GM12878 (cell line): ENCODE measurements at regions of chr7 and their contacts with region 1.

Region 1: DNA sequence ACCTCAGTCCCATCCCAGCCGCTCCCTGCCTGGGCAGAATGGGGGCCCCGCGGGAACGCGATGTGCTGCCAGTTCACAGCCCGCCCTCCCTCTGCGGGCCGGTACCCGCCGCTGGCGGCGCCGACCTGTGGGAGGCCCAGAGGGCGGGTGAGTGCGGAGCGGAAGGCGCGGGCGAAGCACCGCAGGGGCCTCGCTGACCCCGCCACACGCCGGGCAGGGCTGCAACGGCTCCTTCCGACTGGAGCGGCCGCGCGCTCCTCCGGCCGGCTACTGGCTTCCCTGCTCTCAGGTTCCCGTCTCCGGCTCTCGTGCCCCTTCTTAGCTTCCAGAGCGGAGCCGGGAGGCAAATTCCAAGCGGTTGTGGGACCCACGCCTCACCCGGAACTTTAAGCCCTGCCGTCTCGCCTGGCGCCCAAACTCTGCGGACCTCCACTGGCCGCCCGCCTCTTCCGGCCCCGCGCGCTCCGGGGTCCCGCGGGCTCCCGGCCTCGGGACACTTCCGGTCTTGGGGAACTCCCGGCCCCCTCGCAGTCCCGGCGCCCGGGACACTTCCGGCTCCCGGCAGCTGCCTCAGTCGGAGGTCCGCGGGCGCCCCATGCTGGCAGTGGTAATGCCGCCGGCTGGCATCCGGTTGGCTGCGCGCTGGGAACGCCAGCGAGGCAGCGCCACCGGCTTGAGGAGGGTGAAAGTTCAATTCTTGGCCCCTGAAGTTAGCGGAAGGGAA is at the start of gene CYREN:
- DNase-seq: no peak
- ATAC-seq: peak; percentile 78
- H3K4me3 ChIP-seq: peak within 1 kb of the TSS; percentile 84
- H3K27ac ChIP-seq: peak within 1 kb of the TSS; percentile 96
- H3K4me1 ChIP-seq: peaks cover 24% of the 10 kb centered on the region
- H3K27me3 ChIP-seq: no peaks in the 10 kb centered on the region
- CTCF ChIP-seq: peak; percentile 69 to 88 (median 70)
- EP300 ChIP-seq: no peak; a peak in 1 of 4 replicates
- POLR2A ChIP-seq: peak; percentile 88; the same call in 1 of the 2 replicates
- RAD21 ChIP-seq: peak; percentile 74
- polyA plus RNA-seq, gene CYREN: 8.7 to 12.9 TPM

Region 2: GRCh38 chr7:134745851-134746250 is 424.6 kb before region 1 on chr7:
- CTCF ChIA-PET with region 1: no interaction called
- POLR2A ChIA-PET with region 1: no interaction called
- RAD21 ChIA-PET with region 1: no interaction called
- SMC1A ChIA-PET with region 1: no interaction called
- in situ Hi-C with region 1: no loop called
- intact Hi-C with region 1: no loop called
- DNase-seq: no peak
- ATAC-seq: no peak
- H3K4me3 ChIP-seq: no peak overlapping the region
- H3K27ac ChIP-seq: no peak overlapping the region
- H3K4me1 ChIP-seq: no peaks in the 10 kb centered on the region
- H3K27me3 ChIP-seq: 0 out of 4 replicates have a peak, but pooled peaks cover 0 to 2% of the 10 kb centered on the region in 2 experiments
- CTCF ChIP-seq: no peak
- EP300 ChIP-seq: no peak
- POLR2A ChIP-seq: no peak
- RAD21 ChIP-seq: no peak

Region 3: DNA sequence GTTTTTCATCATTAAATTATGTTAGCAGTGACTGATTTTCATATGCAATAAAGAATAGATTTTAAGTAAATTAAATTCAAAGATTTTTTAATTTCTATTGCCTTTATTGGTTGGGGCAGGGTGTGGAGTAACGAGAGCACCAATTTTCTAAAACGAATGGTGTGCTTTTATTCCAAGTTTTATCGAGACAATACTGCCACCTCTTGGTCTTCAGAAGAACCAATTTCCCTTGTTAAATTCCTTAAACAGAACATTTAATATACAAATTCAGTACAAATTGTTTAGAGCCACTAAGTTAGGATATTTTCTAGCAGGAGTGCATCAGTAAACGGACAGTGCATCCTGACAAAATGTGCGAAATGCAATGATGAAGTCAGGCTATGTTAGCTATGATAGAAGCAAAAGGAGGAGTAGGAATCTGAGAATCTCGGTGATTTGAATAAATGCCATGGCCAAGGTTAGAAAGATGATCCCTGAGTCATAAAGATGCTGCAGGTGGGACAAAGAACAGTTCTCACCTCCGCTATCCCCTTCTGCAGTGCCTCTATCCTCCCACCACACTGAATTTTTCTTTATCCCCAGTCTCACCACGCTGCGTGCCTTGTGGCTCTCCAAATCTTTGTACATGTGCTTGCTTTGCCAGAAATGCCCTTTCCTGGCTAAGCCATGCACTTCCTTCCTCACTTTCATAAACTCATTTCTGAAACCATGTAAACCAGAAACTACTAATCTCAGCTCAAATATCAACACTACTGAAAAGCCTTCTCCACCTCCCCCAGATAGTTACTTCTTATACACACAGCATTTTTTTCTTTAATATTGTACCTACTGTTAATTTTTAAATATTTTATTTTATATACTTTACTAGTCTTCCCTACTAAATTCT is 216.0 kb before region 1 on chr7:
- CTCF ChIA-PET with region 1: interaction called, 24 read pairs
- POLR2A ChIA-PET with region 1: no interaction called
- RAD21 ChIA-PET with region 1: interaction called, 10 read pairs
- SMC1A ChIA-PET with region 1: interaction called, 6 read pairs
- in situ Hi-C with region 1: no loop called
- intact Hi-C with region 1: no loop called
- DNase-seq: peak; percentile 15
- ATAC-seq: peak; percentile 83
- H3K4me3 ChIP-seq: no peak overlapping the region
- H3K27ac ChIP-seq: no peak overlapping the region
- H3K4me1 ChIP-seq: no peaks in the 10 kb centered on the region; the same call in 1 of the 2 replicates
- H3K27me3 ChIP-seq: no peaks in the 10 kb centered on the region
- CTCF ChIP-seq: peak; percentile 49 to 64 (median 58)
- EP300 ChIP-seq: no peak
- POLR2A ChIP-seq: no peak
- RAD21 ChIP-seq: peak; percentile 72

Region 4: DNA sequence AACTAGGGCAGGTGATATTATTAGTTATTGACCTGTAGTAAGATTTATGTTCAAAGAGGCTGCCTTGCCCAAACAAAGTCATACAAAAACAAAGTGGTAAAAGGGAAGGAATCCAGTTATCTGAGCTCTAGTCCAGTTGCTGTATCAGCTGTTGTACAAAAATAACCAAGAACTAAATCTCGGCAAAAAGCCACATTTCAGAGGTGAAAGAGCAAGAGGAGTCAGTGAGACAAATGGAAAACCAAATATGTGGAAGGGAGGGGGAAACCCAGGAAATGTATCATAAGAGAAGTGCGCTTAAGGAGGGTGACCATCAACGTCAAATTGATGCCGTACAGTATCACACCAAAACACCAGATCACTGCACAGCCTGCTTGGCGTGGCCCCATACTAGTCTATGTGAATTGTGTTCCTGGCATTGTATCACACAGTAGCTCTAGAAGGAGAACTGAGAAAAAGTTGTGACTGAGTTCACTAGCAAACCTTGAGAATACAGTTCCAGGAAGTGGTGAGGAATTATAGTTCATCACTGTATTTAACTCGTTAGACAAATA is 177.7 kb before region 1 on chr7:
- CTCF ChIA-PET with region 1: interaction called, 157 read pairs
- POLR2A ChIA-PET with region 1: interaction called, 41 read pairs
- RAD21 ChIA-PET with region 1: interaction called, 120 read pairs
- SMC1A ChIA-PET with region 1: interaction called, 97 read pairs
- in situ Hi-C with region 1: loop called (anchors 5 kb)
- intact Hi-C with region 1: loop called (anchors 1 kb)
- DNase-seq: peak; percentile 96
- ATAC-seq: peak; percentile 67
- H3K4me3 ChIP-seq: peak overlapping the region; percentile 32; the same call in 1 of the 2 replicates
- H3K27ac ChIP-seq: peak overlapping the region; percentile 99
- H3K4me1 ChIP-seq: peaks cover 61% of the 10 kb centered on the region
- H3K27me3 ChIP-seq: no peaks in the 10 kb centered on the region
- CTCF ChIP-seq: no peak
- EP300 ChIP-seq: peak; percentile 86 to 95
- POLR2A ChIP-seq: peak; percentile 77
- RAD21 ChIP-seq: no peak

Region 5: GRCh38 chr7:135160098-135160857 is 10.2 kb before region 1 on chr7:
- CTCF ChIA-PET with region 1: interaction called, 28 read pairs
- POLR2A ChIA-PET with region 1: interaction called, 19 read pairs
- RAD21 ChIA-PET with region 1: interaction called, 17 read pairs
- SMC1A ChIA-PET with region 1: interaction called, 23 read pairs
- in situ Hi-C with region 1: no loop called
- intact Hi-C with region 1: no loop called
- DNase-seq: no peak
- ATAC-seq: peak; percentile 59
- H3K4me3 ChIP-seq: no peak overlapping the region; the same call in 1 of the 2 replicates
- H3K27ac ChIP-seq: peak overlapping the region; percentile 84
- H3K4me1 ChIP-seq: peaks cover 32% of the 10 kb centered on the region
- H3K27me3 ChIP-seq: no peaks in the 10 kb centered on the region
- CTCF ChIP-seq: no peak
- EP300 ChIP-seq: peak in 1 of 2 experiments; percentile 15; a peak in 1 of 4 replicates
- POLR2A ChIP-seq: no peak; the same call in 1 of the 2 replicates
- RAD21 ChIP-seq: no peak

Region 6: DNA sequence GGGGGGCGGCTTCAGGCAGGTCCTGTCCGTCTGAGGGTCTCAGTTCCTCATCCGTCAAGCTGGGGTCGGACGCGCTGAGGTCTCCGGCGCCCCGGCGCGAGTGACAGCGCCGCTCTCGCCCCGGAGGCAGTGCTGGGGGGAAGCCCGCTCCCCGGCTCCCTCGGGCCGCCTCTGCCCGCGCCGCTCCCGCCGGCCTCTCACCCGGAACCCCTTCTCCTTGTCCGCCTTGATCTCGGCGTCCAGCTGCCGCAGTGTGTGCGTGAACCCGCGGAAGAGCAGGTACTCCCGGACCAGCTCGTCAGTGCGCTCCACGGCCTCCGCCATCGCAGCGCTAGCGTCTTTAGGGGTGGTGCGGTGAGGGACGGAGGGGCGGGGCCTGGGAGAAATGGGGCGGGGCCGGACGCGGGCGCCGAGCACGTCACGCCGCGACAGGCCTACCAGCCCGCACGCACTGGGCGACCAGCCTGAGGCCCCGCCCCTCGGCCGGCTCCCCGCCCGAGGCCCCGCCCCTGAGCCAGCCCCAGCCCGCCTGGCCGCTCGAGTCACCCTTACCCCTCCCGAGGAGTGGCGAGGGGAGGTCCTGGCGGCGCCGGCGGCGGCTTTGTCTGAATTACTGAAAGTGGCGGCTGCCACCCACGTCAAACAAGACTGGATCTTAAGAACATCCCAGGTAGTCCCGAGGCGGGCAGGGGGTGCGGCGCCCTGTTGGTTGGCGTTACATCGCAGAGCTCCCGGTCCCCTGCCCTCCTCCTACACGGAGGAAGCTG is 40.9 kb after region 1 on chr7 and contains the start of gene WDR91:
- CTCF ChIA-PET with region 1: interaction called, 109 read pairs
- POLR2A ChIA-PET with region 1: interaction called, 96 read pairs
- RAD21 ChIA-PET with region 1: interaction called, 151 read pairs
- SMC1A ChIA-PET with region 1: interaction called, 93 read pairs
- in situ Hi-C with region 1: no loop called
- intact Hi-C with region 1: loop called (anchors 1 kb)
- DNase-seq: peak; percentile 81
- ATAC-seq: peak; percentile 83
- H3K4me3 ChIP-seq: peak within 1 kb of the TSS; percentile 99
- H3K27ac ChIP-seq: peak within 1 kb of the TSS; percentile 91
- H3K4me1 ChIP-seq: peaks cover 39% of the 10 kb centered on the region
- H3K27me3 ChIP-seq: no peaks in the 10 kb centered on the region
- CTCF ChIP-seq: no peak
- EP300 ChIP-seq: no peak
- POLR2A ChIP-seq: peak; percentile 98
- RAD21 ChIP-seq: no peak
- polyA plus RNA-seq, gene WDR91: 7.6 to 10.1 TPM